Caco-2 (cell line): ENCODE measurements at regions of chr14 and their contacts with region 1.

Region 1: DNA sequence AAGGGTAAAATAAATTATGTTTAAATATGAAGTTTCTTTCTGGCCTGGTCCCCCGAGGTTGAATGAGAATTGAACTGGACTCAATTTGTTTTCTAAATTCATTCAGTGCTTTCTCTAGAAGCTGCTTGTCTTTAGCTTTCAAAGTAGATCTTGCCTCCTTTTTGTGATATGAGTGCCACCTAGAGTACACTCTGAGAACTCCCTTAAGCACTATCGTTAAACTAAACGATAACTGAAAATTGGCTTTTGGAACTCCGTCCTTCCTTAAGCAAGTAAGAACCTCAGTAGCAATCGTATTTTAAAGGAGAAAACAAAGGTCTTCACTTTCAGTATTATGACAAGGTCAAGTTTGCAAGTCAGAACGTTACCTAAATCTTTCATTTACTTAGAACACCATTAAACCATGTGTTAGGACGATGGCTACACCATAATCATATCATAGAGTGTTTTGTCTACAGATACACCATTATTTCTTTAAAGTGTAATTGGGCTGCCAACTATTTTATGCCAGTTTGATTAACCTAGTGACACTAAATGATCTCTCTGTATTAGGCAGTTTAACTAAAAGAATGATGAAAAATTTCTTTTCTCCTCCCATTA is 364.8 kb downstream of the SNAPC1 start:
- DNase-seq: peak in 1 of 2 experiments; percentile 56
- H3K4me3 ChIP-seq: no peak overlapping the region
- H3K4me3 Mint-ChIP-seq: no peak overlapping the region
- H3K27ac Mint-ChIP-seq: no peak overlapping the region
- H3K4me1 ChIP-seq: no peaks in the 10 kb centered on the region
- H3K4me1 Mint-ChIP-seq: no peaks in the 10 kb centered on the region
- H3K27me3 ChIP-seq: no peaks in the 10 kb centered on the region
- H3K27me3 Mint-ChIP-seq: peaks cover 3% of the 10 kb centered on the region
- CTCF ChIP-seq: peak; percentile 51 to 76

Region 2: DNA sequence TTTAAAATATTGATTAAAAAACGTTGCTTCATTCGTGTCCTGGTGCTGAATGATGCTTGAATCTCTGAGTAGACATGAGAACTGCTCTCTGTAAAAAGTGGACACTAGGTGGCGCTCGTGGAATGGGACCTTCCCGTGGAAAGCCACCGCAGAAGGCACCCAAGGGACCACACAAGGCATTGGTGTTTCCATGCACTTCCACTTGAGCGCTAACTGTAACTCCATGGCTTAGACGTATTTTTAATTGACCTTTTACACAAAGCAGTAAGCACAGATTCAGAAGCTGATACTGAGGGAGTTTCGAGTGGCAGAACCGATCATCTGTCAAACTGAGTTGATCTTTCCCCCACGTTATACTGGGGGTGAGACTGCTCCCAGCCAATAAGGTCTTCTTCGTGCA is 670.3 kb before region 1 on chr14:
- CTCF ChIA-PET with region 1: no interaction called
- POLR2A ChIA-PET with region 1: no interaction called
- intact Hi-C with region 1: loop called (anchors 1 kb)
- DNase-seq: peak; percentile 74 to 78
- H3K4me3 ChIP-seq: no peak overlapping the region
- H3K4me3 Mint-ChIP-seq: no peak overlapping the region
- H3K27ac Mint-ChIP-seq: no peak overlapping the region
- H3K4me1 ChIP-seq: no peaks in the 10 kb centered on the region
- H3K4me1 Mint-ChIP-seq: no peaks in the 10 kb centered on the region
- H3K27me3 ChIP-seq: no peaks in the 10 kb centered on the region
- H3K27me3 Mint-ChIP-seq: no peaks in the 10 kb centered on the region
- CTCF ChIP-seq: peak; percentile 84 to 87

Region 3: GRCh38 chr14:61860294-61860918 is 266.6 kb before region 1 on chr14:
- CTCF ChIA-PET with region 1: no interaction called
- POLR2A ChIA-PET with region 1: no interaction called
- intact Hi-C with region 1: loop called (anchors 1 kb)
- DNase-seq: peak in 1 of 2 experiments; percentile 59
- H3K4me3 ChIP-seq: no peak overlapping the region
- H3K4me3 Mint-ChIP-seq: no peak overlapping the region
- H3K27ac Mint-ChIP-seq: no peak overlapping the region
- H3K4me1 ChIP-seq: no peaks in the 10 kb centered on the region
- H3K4me1 Mint-ChIP-seq: peaks cover 7% of the 10 kb centered on the region
- H3K27me3 ChIP-seq: no peaks in the 10 kb centered on the region
- H3K27me3 Mint-ChIP-seq: peaks cover 13% of the 10 kb centered on the region
- CTCF ChIP-seq: peak; percentile 70 to 80

Region 4: GRCh38 chr14:61894452-61895077 is 232.4 kb before region 1 on chr14:
- CTCF ChIA-PET with region 1: interaction called, 11 read pairs
- POLR2A ChIA-PET with region 1: no interaction called
- intact Hi-C with region 1: loop called (anchors 1 kb)
- DNase-seq: peak; percentile 54 to 67
- H3K4me3 ChIP-seq: no peak overlapping the region
- H3K4me3 Mint-ChIP-seq: no peak overlapping the region
- H3K27ac Mint-ChIP-seq: no peak overlapping the region
- H3K4me1 ChIP-seq: no peaks in the 10 kb centered on the region
- H3K4me1 Mint-ChIP-seq: no peaks in the 10 kb centered on the region
- H3K27me3 ChIP-seq: no peaks in the 10 kb centered on the region
- H3K27me3 Mint-ChIP-seq: peaks cover 9% of the 10 kb centered on the region
- CTCF ChIP-seq: peak; percentile 62 to 83

Region 5: GRCh38 chr14:61923369-61923768 is 203.6 kb before region 1 on chr14:
- CTCF ChIA-PET with region 1: interaction called, 16 read pairs
- POLR2A ChIA-PET with region 1: no interaction called
- intact Hi-C with region 1: loop called (anchors 1 kb)
- DNase-seq: peak in 1 of 2 experiments; percentile 18
- H3K4me3 ChIP-seq: no peak overlapping the region
- H3K4me3 Mint-ChIP-seq: no peak overlapping the region
- H3K27ac Mint-ChIP-seq: no peak overlapping the region
- H3K4me1 ChIP-seq: peaks cover 34% of the 10 kb centered on the region
- H3K4me1 Mint-ChIP-seq: peaks cover 22% of the 10 kb centered on the region
- H3K27me3 ChIP-seq: no peaks in the 10 kb centered on the region; the same call in 1 of the 2 replicates
- H3K27me3 Mint-ChIP-seq: no peaks in the 10 kb centered on the region
- CTCF ChIP-seq: peak; percentile 25 to 35